ENCODE measurements at regions of chr6 and their contacts with region 1.

Region 1: DNA sequence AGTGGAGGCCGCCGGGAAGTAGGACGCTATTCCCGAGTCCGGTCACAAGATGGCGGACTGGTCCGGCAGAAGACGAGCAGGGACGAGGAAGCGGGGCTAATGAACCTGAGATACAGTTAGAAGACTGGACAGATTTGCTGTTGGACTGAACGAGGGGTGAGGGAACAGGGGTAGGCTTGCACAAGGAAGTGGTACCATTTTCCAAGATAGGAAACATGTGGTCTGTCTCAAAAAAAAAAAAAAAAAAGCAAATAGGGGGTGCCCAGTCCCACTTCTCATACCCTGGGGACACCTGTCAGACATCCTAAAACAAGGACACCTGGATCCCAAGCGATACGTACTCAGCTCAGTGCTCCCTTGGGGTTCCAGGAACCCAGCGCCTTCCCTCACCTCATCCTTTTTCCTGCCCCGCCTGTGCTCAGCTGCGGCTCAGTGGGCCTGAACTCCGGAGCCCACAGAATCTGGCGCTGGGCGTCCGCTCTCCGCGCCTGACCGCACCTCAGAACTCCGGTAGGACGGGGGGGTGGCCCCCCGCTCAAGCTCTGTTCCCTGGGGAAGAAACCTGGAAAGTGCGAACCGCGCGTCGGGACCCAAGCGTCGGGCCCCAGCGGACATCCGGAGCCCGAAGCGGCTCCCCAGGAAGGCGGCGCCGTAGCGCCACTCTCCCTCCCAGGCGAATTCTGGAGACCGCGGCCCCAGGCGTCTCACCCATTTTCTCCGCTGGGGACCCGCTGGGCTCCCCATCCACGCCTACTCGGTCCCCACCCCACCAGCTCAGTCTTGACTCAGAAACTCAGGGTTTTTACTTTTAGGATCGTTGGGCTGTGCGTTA is at the start of gene LY6G5C:
- DNase-seq: peak; percentile 91 to 92
- H3K4me3 ChIP-seq: peak within 1 kb of the TSS in 2 of 3 donors; percentile 24 to 27
- H3K27ac ChIP-seq: peak within 1 kb of the TSS; percentile 79 to 84 (median 80)
- H3K4me1 ChIP-seq: peaks cover 10 to 18% of the 10 kb centered on the region in 2 donors
- H3K27me3 ChIP-seq: no peaks in the 10 kb centered on the region
- CTCF ChIP-seq: peak; percentile 25 to 89 (median 80)
- POLR2A ChIP-seq: peak in 1 of 2 donors; percentile 42
- total RNA-seq, gene LY6G5C: 0.54 to 7.9 (median 0.83) TPM in 3 of 4 donors, not detected in the other

Region 2: GRCh38 chr6:31143148-31143547 is 537.9 kb before region 1 on chr6:
- intact Hi-C with region 1: no loop called
- DNase-seq: no peak
- H3K4me3 ChIP-seq: no peak overlapping the region
- H3K27ac ChIP-seq: no peak overlapping the region
- H3K4me1 ChIP-seq: no peaks in the 10 kb centered on the region
- H3K27me3 ChIP-seq: no peaks in the 10 kb centered on the region
- CTCF ChIP-seq: no peak
- POLR2A ChIP-seq: no peak

Region 3: GRCh38 chr6:31513456-31514165 is 167.4 kb before region 1 on chr6:
- intact Hi-C with region 1: no loop called
- DNase-seq: no peak
- H3K4me3 ChIP-seq: no peak overlapping the region
- H3K27ac ChIP-seq: no peak overlapping the region
- H3K4me1 ChIP-seq: no peaks in the 10 kb centered on the region
- H3K27me3 ChIP-seq: no peaks in the 10 kb centered on the region
- CTCF ChIP-seq: no peak
- POLR2A ChIP-seq: no peak

Region 4: DNA sequence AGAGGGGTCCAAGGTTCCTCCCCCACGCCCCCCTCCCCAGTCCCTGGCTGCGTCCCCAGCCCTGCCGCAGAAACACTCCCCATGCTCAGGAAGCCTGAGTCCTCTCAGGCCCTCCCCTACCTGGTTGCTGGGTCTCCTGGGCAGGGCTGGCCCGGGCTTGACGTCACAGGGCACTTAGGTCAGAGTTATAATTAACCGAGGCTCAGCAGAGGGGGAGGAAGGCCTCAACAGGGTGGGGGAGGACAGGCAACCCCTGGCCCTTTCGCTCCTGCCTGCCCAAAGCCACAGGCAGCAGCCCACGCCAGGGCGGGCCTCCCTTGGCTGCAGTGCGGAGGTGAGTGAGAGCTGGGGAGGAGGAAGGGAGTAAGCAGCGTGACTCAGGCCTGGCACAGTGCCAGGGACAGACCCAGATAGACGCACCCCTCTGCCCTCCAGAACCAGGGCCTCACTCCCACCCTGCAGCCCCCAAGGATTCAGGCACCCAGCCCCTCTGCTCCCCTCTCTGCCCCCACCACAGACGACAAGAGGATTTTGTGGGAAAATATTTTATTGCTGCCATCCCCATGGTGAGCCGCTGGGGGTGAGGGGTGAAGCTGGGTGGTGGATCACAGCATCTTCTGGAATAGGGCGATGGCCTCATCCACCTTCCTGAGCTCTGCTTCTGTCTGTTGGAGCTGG is 96.1 kb after region 1 on chr6 and contains the start of gene VWA7:
- intact Hi-C with region 1: no loop called
- DNase-seq: peak; percentile 75 to 86
- H3K4me3 ChIP-seq: no peak within 1 kb of the TSS
- H3K27ac ChIP-seq: peak within 1 kb of the TSS in 2 of 3 donors; percentile 66 to 69
- H3K4me1 ChIP-seq: peaks cover 8 to 14% of the 10 kb centered on the region in 2 donors
- H3K27me3 ChIP-seq: no peaks in the 10 kb centered on the region
- CTCF ChIP-seq: no peak
- POLR2A ChIP-seq: peak in 1 of 2 donors; percentile 36
- total RNA-seq, gene VWA7: 1.2 to 8.9 (median 5.4) TPM

Region 5: DNA sequence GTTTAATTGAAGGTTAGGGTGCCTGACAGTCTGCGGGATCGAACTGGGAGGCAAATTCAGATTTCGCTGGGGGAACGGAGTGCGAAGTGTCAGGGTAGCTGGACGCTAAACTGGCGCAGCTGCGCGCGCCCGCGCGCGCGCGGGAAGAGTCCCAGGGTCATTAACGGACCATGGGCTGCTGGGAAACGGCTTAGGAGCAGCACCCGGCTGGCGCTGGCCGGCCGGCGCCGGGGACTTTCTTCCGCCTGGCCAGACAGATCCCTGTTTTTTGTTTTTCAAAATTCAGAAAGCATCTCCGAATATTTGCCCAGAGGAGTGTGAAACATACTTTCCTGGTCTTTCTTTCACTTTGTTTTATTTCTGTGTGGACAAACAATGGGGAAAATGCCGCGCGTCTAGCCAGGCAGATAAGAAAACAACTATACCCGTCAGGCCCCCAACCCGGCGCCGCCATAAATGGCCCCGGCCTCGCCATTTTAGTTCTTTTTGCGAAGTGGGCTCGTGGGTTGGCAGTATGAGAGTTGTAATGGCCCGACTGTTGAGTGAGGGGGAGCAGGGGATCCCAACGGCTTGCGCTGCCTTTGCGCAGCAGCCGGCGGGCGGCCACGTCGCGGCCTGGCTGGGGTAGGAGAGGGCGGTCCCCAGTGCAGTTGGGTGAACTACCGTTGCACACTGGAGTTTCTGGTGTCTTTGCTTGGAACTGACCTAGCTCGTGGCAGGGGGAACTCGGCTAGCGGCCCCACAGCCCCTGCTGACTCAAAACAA is 153.6 kb after region 1 on chr6:
- intact Hi-C with region 1: loop called (anchors 5 kb)
- DNase-seq: peak; percentile 87 to 90
- H3K4me3 ChIP-seq: peak overlapping the region; percentile 55 to 85 (median 77)
- H3K27ac ChIP-seq: peak overlapping the region; percentile 90 to 100 (median 92)
- H3K4me1 ChIP-seq: peaks cover 40 to 42% of the 10 kb centered on the region in 2 donors
- H3K27me3 ChIP-seq: no peaks in the 10 kb centered on the region
- CTCF ChIP-seq: peak in 1 of 6 experiments; percentile 13
- POLR2A ChIP-seq: peak; percentile 28 to 86

Region 6: GRCh38 chr6:31969712-31970603 is 288.9 kb after region 1 on chr6:
- intact Hi-C with region 1: loop called (anchors 10 kb)
- DNase-seq: no peak
- H3K4me3 ChIP-seq: no peak overlapping the region
- H3K27ac ChIP-seq: no peak overlapping the region
- H3K4me1 ChIP-seq: peaks cover 12 to 18% of the 10 kb centered on the region in 2 donors
- H3K27me3 ChIP-seq: no peaks in the 10 kb centered on the region
- CTCF ChIP-seq: no peak
- POLR2A ChIP-seq: no peak

Region 7: GRCh38 chr6:32589598-32590449 is 908.8 kb after region 1 on chr6 and contains the start of gene HLA-DRB1:
- intact Hi-C with region 1: no loop called
- DNase-seq: no peak
- H3K4me3 ChIP-seq: no peak within 1 kb of the TSS
- H3K27ac ChIP-seq: peak within 1 kb of the TSS in 1 of 3 donors; percentile 56
- H3K4me1 ChIP-seq: no peaks in the 10 kb centered on the region
- H3K27me3 ChIP-seq: no peaks in the 10 kb centered on the region
- CTCF ChIP-seq: no peak
- POLR2A ChIP-seq: peak in 1 of 2 donors; percentile 24
- total RNA-seq, gene HLA-DRB1: 17.1 to 28.1 (median 22.8) TPM

Measured in thyroid gland (tissue), 4 donors.